Left colon (tissue), 2 donors: ENCODE measurements at regions of chr20 and their contacts with region 1.

Region 1: DNA sequence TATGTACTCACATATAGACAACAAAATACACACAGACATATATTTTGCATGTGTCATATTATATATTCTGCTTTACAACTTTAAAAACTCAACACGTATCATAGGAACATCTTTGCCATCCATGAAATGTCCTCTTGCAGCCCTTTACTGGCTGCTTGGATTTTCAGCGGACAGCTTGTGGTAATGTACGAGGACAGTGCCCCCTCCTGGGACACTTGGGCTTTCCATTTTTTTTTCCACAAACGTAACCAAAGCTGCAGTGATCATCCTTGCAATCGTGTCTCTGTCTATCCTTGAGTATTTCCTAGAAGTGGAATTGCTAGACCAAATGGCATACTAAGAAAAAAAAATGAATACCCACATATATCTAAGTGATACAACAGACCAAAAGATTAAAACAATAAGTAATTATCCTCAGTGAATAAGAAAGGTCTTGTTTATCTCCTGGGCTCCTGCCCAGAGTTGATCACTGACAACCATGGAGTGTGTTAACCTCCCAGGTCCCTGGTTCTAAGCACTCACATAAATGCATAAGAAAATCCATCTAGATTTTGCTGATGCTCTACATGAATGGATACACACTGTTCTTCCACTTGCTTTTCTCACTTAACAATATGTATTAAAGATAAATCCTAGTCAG is 18.1 kb downstream of the BPI start:
- DNase-seq: peak in 1 of 2 donors; percentile 10
- ATAC-seq: no peak

Region 2: GRCh38 chr20:38229376-38230252 is 92.5 kb before region 1 on chr20:
- intact Hi-C with region 1: loop called in 1 of 2 experiments (anchors 10 kb)
- DNase-seq: no peak
- ATAC-seq: no peak

Region 3: DNA sequence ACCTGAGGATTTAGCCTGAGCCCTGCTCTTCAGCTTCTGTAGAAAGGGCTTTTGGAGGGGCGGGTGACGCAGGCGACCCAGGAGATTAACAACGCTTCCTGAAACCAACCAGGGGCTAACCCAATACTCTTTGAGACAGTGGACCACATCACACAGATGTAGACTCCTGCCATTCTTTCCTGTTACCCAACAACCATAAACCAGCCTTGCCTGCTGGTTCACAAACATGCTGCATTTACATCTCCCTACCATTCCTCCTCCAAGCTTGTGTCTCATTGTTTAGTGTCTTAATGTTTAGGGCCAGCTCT is 511.7 kb after region 1 on chr20:
- intact Hi-C with region 1: no loop called
- DNase-seq: no peak
- ATAC-seq: no peak